ENCODE measurements at regions of chr6 and their contacts with region 1.

Region 1: GRCh38 chr6:52108128-52108527 is 20.7 kb upstream of the PKHD1 start:
- DNase-seq: no peak
- ATAC-seq: no peak
- H3K4me3 ChIP-seq: no peak overlapping the region
- H3K27ac ChIP-seq: no peak overlapping the region
- H3K4me1 ChIP-seq: no peaks in the 10 kb centered on the region
- H3K27me3 ChIP-seq: peaks cover 0 to 12% (median 0%) of the 10 kb centered on the region in 7 donors
- CTCF ChIP-seq: no peak

Region 2: DNA sequence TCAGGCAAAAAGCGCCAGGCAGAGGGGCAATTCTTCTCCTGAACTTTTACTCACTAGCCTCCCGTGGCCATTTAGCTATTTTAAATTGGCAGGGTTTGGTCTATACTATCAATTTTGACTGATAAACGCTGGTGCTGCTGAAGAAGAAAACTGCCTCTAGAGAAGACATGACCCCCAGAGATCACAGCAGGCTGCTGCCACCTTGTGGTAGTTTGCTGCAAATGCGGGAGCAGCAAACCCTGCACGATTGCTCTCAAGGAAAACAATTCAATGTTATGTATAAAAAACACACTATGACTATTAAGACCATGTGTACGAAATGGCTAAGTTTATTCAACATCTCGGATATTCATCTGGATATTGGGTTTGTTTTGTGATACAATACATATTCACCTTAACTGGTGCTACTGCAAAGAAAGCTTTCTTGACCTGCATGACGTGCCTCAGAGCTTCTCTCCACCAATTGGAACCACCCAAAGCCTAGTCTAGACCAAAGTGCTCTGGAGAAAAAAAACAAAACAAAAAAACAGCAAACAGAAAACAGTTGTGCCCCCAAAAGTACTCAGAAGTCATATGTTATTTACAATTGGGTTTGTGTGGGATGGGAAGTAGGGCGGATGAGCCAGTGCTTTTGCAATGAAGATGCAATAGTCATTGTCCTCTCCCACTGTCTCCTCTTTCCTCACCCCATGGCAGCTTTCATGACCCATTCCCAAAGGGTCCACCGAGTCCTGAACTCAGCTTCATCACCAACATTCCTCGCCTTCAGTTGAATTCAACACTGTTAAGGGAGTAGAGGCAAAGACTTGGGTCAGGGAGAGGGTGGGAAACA is 155.8 kb after region 1 on chr6:
- intact Hi-C with region 1: loop called in 1 of 10 experiments (anchors 10 kb)
- DNase-seq: peak; percentile 33 to 49
- ATAC-seq: peak in 6 of 8 donors; percentile 56 to 72 (median 65)
- H3K4me3 ChIP-seq: no peak overlapping the region
- H3K27ac ChIP-seq: no peak overlapping the region
- H3K4me1 ChIP-seq: no peaks in the 10 kb centered on the region
- H3K27me3 ChIP-seq: no peaks in the 10 kb centered on the region
- CTCF ChIP-seq: peak; percentile 76 to 96 (median 92)

Measured in heart right ventricle (tissue), 16 donors.